ENCODE measurements at regions of chr3 and their contacts with region 1.

Region 1: GRCh38 chr3:161349529-161350278 is 21.6 kb downstream of the SPTSSB start:
- DNase-seq: no peak
- ATAC-seq: peak; percentile 86
- H3K4me3 ChIP-seq: no peak overlapping the region
- H3K27ac ChIP-seq: no peak overlapping the region
- H3K4me1 ChIP-seq: no peaks in the 10 kb centered on the region
- H3K27me3 ChIP-seq: no peaks in the 10 kb centered on the region
- CTCF ChIP-seq: no peak
- EP300 ChIP-seq: 0 out of 4 replicates have a peak, but pooled peaks of 1 of the 2 experiments have one; percentile 16
- POLR2A ChIP-seq: no peak
- RAD21 ChIP-seq: no peak

Region 2: DNA sequence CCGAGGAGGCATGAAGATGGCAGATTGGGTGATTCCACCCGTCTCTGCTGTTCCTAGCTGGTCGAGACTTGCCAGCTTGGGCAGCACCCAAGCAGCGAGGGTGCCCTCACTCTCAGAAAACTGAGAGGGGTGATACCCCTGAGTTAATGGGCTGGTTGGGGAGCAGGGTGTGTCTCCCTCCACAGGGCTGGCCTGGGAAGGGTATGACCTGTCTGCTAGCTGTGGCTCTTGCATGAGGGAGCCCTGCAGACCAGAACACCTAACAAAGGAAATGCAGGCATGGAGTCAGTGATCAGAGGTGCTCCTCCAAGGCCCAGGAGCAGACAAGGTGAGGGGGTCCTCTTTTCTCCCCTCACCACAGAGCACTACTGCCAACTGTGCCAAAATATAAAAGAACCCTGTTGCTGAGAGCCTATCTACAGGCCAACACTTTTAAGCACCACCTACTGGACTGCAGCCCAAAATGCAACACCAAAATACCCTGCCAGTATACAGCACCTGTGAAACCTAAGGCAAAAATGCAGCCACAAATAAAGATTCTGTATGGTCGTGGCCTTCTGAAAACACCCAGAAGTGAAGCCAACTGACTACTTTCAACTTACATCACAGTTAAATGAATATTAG is 629.5 kb before region 1 on chr3:
- CTCF ChIA-PET with region 1: no interaction called
- POLR2A ChIA-PET with region 1: no interaction called
- RAD21 ChIA-PET with region 1: no interaction called
- SMC1A ChIA-PET with region 1: no interaction called
- in situ Hi-C with region 1: no loop called
- intact Hi-C with region 1: no loop called
- DNase-seq: no peak
- ATAC-seq: peak; percentile 83
- H3K4me3 ChIP-seq: no peak overlapping the region
- H3K27ac ChIP-seq: no peak overlapping the region
- H3K4me1 ChIP-seq: no peaks in the 10 kb centered on the region
- H3K27me3 ChIP-seq: no peaks in the 10 kb centered on the region; a peak in 1 of 4 replicates
- CTCF ChIP-seq: peak; percentile 30 to 35 (median 33); a peak in 4 of 6 replicates
- EP300 ChIP-seq: no peak
- POLR2A ChIP-seq: no peak
- RAD21 ChIP-seq: peak; percentile 31; the same call in 1 of the 2 replicates

Region 3: DNA sequence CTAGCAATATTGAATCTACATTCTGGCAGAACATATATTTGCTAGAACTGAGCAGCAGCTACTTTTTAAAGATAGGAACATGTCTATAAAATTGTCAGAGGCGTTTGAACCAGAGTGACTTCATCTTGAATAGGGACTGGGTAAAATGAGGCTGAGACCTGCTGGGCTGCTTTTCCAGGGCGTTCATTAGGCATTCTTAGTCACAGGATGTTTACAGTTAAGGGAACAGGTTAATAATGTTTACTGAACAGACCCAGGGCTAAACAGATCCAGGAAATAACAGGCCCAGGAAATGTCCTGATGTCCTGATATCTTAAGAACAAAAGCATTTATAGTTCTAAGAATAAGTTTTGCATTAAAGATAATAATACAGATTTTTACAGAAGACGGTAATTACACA is 210.0 kb before region 1 on chr3:
- CTCF ChIA-PET with region 1: no interaction called
- POLR2A ChIA-PET with region 1: no interaction called
- RAD21 ChIA-PET with region 1: no interaction called
- SMC1A ChIA-PET with region 1: no interaction called
- in situ Hi-C with region 1: no loop called
- intact Hi-C with region 1: no loop called
- DNase-seq: no peak
- ATAC-seq: no peak
- H3K4me3 ChIP-seq: no peak overlapping the region
- H3K27ac ChIP-seq: no peak overlapping the region
- H3K4me1 ChIP-seq: no peaks in the 10 kb centered on the region
- H3K27me3 ChIP-seq: no peaks in the 10 kb centered on the region
- CTCF ChIP-seq: no peak
- EP300 ChIP-seq: no peak
- POLR2A ChIP-seq: no peak
- RAD21 ChIP-seq: no peak

Region 4: GRCh38 chr3:161310649-161311423 is 38.9 kb before region 1 on chr3:
- CTCF ChIA-PET with region 1: no interaction called
- POLR2A ChIA-PET with region 1: interaction called, 3 read pairs
- RAD21 ChIA-PET with region 1: no interaction called
- SMC1A ChIA-PET with region 1: interaction called, 7 read pairs
- in situ Hi-C with region 1: no loop called
- intact Hi-C with region 1: loop called (anchors 1 kb)
- DNase-seq: peak; percentile 62
- ATAC-seq: peak; percentile 85
- H3K4me3 ChIP-seq: no peak overlapping the region
- H3K27ac ChIP-seq: no peak overlapping the region
- H3K4me1 ChIP-seq: peaks cover 14% of the 10 kb centered on the region
- H3K27me3 ChIP-seq: no peaks in the 10 kb centered on the region
- CTCF ChIP-seq: no peak
- EP300 ChIP-seq: no peak; a peak in 1 of 4 replicates
- POLR2A ChIP-seq: no peak
- RAD21 ChIP-seq: no peak

Region 5: DNA sequence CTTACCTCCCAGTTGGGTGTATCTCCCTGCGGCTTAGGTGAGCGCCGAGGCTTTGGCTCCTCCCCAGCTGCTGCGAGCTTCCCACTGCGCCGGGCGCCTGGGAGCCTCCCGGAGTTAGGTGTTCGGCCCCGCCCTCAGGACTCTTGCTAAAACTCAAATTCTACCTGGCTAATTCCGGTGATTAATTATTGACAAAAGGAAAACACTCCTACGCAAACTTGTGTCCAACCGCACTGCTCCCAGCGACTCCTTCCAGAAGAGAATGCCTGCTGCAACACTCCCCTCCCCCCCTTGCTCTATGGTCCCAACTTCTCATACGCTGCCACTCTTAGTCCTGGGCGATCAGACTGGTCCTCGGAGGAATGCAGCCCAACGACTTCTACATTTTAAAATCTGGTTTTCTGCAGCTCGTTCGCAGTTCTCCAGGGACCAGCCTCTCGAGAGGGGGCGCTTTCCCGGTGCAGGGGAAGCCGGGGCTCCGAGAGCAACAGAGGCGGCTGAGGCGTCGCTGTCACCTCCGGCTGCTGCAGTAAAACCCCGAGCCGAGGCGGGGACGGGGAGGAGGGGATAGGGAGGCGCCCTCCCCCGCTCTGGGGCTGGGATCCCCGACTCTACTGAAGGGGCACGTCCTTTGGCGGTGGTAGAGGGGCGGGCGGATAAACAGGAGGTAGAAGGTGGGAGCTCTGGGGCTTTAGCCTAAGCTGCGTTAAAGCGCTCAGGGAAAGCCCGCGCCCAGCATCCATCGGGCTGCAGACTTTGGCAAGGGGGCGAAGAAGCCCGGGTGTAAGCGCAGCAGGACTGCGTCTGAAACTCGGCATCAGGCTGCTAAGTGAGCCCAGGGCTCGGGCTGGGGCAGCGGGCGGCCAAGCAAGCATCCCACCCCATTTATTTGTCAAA is 22.0 kb after region 1 on chr3 and contains the start of gene SPTSSB:
- CTCF ChIA-PET with region 1: no interaction called
- POLR2A ChIA-PET with region 1: no interaction called
- RAD21 ChIA-PET with region 1: no interaction called
- SMC1A ChIA-PET with region 1: interaction called, 3 read pairs
- in situ Hi-C with region 1: no loop called
- intact Hi-C with region 1: loop called (anchors 2 kb)
- DNase-seq: no peak
- ATAC-seq: peak; percentile 74
- H3K4me3 ChIP-seq: no peak within 1 kb of the TSS
- H3K27ac ChIP-seq: no peak within 1 kb of the TSS
- H3K4me1 ChIP-seq: no peaks in the 10 kb centered on the region
- H3K27me3 ChIP-seq: peaks cover 6 to 18% of the 10 kb centered on the region in 2 experiments
- CTCF ChIP-seq: 0 out of 6 replicates have a peak, but pooled peaks of 1 of the 3 experiments have one; percentile 6
- EP300 ChIP-seq: no peak
- POLR2A ChIP-seq: no peak
- RAD21 ChIP-seq: no peak
- polyA plus RNA-seq, gene SPTSSB: 0.60 to 1.3 TPM

Measured in GM12878 (cell line).